ENCODE measurements at regions of chr1 and their contacts with region 1.

Region 1: GRCh38 chr1:155172732-155173477 is at the start of gene KRTCAP2:
- DNase-seq: peak; percentile 98
- H3K4me3 Mint-ChIP-seq: peak within 1 kb of the TSS; percentile 93
- H3K27ac Mint-ChIP-seq: peak within 1 kb of the TSS; percentile 97
- H3K4me1 Mint-ChIP-seq: peaks cover 46% of the 10 kb centered on the region
- H3K27me3 Mint-ChIP-seq: no peaks in the 10 kb centered on the region
- total RNA-seq, gene KRTCAP2: 129 to 137 TPM

Region 2: GRCh38 chr1:155099331-155099730 is 73.6 kb before region 1 on chr1:
- CTCF ChIA-PET with region 1: interaction called, 21 read pairs
- intact Hi-C with region 1: no loop called
- DNase-seq: no peak
- H3K4me3 Mint-ChIP-seq: no peak overlapping the region
- H3K27ac Mint-ChIP-seq: no peak overlapping the region
- H3K4me1 Mint-ChIP-seq: no peaks in the 10 kb centered on the region
- H3K27me3 Mint-ChIP-seq: no peaks in the 10 kb centered on the region

Region 3: GRCh38 chr1:155185351-155186066 is 12.6 kb after region 1 on chr1:
- CTCF ChIA-PET with region 1: interaction called, 11 read pairs
- intact Hi-C with region 1: no loop called
- DNase-seq: no peak
- H3K4me3 Mint-ChIP-seq: no peak overlapping the region
- H3K27ac Mint-ChIP-seq: no peak overlapping the region
- H3K4me1 Mint-ChIP-seq: peaks cover 3% of the 10 kb centered on the region
- H3K27me3 Mint-ChIP-seq: no peaks in the 10 kb centered on the region

Region 4: DNA sequence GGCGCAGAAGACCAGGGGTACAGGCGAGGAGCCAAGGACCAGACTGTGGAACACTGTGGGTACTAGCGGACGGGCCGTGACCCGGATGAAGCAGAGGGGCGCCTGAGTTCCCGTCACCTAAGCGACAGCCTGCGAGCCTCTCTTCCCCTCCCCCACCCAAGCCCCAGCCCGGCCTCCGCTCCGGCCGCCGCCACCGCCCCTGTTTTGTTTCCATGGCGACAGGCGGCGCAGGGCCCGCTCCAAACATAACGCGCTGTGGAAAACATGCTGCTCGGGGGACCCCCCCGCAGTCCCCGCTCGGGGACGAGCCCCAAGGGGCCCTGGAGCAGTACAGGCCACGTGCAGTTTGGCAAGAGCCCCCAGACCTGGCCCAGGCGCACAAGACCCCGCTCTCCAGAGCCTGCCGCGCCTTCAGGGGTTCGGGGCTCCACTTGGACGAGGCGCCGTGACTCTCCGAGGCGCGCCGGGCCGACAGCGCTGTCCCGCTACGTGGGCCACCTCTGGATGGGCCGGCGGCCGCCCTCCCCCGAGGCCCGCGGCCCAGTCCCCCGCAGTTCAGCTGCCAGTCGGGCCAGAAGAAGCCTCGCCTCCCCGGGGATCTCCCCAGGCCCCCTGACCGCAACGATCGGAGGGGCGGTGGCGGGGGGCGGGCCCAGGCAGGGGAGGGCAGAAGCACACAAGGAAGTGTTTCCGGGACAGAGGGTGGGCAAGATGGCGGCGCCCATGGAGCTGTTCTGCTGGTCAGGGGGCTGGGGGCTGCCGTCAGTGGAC is 35.8 kb after region 1 on chr1 and contains the start of gene MTX1:
- CTCF ChIA-PET with region 1: interaction called, 11 read pairs
- intact Hi-C with region 1: loop called (anchors 1 kb)
- DNase-seq: peak; percentile 89
- H3K4me3 Mint-ChIP-seq: peak within 1 kb of the TSS; percentile 88
- H3K27ac Mint-ChIP-seq: peak within 1 kb of the TSS; percentile 71
- H3K4me1 Mint-ChIP-seq: peaks cover 29% of the 10 kb centered on the region
- H3K27me3 Mint-ChIP-seq: no peaks in the 10 kb centered on the region
- total RNA-seq, gene MTX1: 46.8 to 47.4 TPM

Region 5: DNA sequence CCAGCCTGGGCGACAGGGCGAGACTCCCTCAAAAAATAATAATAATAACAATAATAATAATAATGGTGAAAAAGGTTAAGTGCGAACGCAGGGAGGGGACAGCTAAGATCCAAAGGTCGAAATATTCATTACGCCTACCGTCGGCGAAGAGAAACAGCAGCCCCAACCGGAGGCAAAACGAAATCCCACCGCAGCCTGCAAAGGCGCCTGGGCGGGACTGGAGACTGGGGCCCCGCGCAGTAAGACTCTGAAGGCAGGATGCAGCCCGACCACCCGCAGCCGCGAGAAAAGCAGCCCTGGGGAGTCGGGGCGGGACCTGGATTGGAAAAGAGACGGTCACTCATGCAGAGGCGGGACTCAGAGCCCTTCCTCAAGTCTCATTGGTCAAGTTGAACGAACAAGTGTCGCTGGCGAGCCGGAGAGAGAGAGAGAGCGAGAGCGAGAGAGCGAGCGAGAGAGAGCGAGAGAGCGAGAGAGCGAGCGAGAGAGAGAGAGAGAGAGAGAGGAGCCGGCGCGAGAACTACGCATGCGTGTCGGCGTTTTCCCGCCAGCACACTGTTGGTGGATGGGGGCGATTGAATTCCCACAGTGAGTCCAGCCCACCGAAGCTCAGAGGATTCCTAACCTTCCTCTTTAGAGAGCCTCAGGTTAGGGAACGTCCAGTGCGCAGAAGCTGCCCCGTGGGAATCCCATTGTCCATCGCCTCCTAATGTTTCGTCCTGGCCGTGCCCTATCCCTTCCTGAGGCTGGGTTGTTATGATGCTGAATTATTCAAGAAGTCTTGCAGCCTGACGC is 71.7 kb after region 1 on chr1:
- CTCF ChIA-PET with region 1: interaction called, 4 read pairs
- intact Hi-C with region 1: loop called (anchors 1 kb)
- DNase-seq: peak; percentile 99
- H3K4me3 Mint-ChIP-seq: peak overlapping the region; percentile 88
- H3K27ac Mint-ChIP-seq: peak overlapping the region; percentile 98
- H3K4me1 Mint-ChIP-seq: peaks cover 40% of the 10 kb centered on the region
- H3K27me3 Mint-ChIP-seq: peaks cover 2% of the 10 kb centered on the region

Measured in activated naive CD4-positive, alpha-beta T cell treated with anti-CD3 and anti-CD28 coated beads for 36 hours (primary cell).